Gastrocnemius medialis (tissue), 4 donors: ENCODE measurements at regions of chr7 and their contacts with region 1.

Region 1: DNA sequence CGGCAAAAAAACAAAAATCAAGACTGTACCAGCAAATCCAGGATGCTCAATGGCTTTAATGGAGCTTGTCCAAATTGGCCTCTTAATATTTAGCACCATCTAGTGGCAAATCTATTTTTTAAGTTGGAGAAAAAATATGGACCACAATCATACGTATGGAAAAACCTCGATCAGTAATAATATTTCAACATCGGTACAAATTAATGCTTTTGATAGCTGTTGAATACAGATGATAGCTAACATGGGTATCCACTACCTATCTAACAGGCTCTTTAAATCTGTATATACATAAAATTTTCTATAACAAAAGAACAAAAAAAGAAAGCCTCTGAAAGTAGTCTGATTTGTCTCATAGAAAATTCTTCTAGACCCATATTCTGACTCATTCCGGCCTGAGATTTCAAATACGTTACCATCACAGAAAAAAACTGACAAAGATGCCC is 29.2 kb downstream of the COA1 start:
- DNase-seq: no peak
- ATAC-seq: peak; percentile 68 to 75
- H3K4me3 ChIP-seq: no peak overlapping the region
- H3K27ac ChIP-seq: no peak overlapping the region
- H3K4me1 ChIP-seq: peaks cover 13 to 16% of the 10 kb centered on the region in 2 donors
- H3K27me3 ChIP-seq: no peaks in the 10 kb centered on the region
- CTCF ChIP-seq: peak; percentile 48 to 78 (median 69)
- POLR2A ChIP-seq: no peak

Region 2: DNA sequence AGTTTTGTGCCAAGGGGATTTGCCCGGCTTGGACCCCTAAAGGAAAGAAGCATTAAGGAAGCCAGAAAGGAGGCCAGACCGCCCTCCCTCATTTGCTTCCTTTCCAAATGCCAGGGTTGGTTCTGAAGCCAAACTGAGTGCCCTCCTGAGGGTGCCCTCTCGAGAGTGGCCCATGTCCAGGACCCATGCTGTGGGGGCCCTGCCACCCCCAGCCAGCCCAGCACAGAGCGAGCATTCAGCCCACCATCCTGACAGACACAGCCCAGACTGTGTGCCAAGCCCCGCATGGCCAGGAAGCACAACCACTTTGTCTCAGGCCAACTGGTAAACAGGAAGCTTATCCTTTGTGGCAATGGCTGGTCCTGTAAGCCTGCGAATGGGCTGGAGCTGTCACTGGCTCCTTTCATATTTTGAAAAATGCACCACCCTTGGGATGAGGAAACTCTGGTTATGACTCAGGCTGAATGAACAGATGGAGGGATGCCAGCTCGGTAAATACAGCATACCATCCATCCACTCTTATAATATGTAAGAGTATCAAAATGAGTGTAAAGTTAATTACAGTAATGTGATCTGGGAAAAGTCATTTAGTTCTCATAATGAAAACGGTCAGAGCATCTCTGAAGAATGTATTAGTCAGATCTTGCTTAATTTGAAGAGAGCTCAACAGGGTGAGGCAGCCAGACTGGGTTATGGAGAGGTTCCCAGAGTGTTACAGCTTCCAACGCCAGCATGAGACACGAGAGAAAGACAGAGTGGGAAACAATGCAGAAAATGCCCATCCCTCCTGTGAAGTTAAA is 52.2 kb before region 1 on chr7:
- in situ Hi-C with region 1: no loop called
- intact Hi-C with region 1: loop called (anchors 5 kb)
- DNase-seq: peak; percentile 63 to 70
- ATAC-seq: peak; percentile 92 to 93
- H3K4me3 ChIP-seq: peak overlapping the region in 1 of 4 donors; percentile 39
- H3K27ac ChIP-seq: peak overlapping the region; percentile 59 to 83 (median 80)
- H3K4me1 ChIP-seq: peaks cover 45 to 56% of the 10 kb centered on the region in 2 donors
- H3K27me3 ChIP-seq: no peaks in the 10 kb centered on the region
- CTCF ChIP-seq: no peak
- POLR2A ChIP-seq: no peak

Region 3: DNA sequence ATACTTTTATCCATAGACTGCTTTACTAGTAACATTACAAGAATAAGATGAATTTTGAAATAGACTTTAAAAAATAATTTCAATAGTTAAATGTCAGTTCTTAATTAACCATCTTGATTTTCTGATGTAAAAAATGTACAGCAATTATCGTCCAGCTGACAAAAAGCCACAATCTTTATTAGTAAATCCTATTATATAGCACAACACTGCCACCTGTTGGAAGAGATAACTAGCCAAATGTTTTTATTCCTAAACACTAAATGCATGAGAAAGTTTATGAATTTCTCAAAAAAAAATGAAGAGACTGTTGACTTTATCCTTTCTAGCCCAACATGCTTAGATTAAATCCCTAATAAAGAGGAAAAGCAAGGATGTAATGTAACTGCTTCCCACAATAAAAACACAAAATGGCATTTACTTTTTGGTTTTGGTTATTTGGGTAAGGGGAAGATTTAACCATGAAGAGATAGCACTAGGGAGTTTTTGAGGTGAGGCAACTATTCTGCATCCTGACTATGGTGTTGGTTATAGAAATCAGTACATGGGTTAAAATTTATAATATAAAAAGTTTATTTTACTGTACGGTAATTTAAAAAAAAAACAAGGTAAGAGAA is 21.2 kb after region 1 on chr7:
- in situ Hi-C with region 1: no loop called
- intact Hi-C with region 1: loop called (anchors 2 kb)
- DNase-seq: no peak
- ATAC-seq: peak in 1 of 2 donors; percentile 46
- H3K4me3 ChIP-seq: no peak overlapping the region
- H3K27ac ChIP-seq: peak overlapping the region in 2 of 4 donors; percentile 14 to 59
- H3K4me1 ChIP-seq: peaks cover 36 to 44% of the 10 kb centered on the region in 2 donors
- H3K27me3 ChIP-seq: no peaks in the 10 kb centered on the region
- CTCF ChIP-seq: peak; percentile 49 to 85 (median 73)
- POLR2A ChIP-seq: no peak

Region 4: DNA sequence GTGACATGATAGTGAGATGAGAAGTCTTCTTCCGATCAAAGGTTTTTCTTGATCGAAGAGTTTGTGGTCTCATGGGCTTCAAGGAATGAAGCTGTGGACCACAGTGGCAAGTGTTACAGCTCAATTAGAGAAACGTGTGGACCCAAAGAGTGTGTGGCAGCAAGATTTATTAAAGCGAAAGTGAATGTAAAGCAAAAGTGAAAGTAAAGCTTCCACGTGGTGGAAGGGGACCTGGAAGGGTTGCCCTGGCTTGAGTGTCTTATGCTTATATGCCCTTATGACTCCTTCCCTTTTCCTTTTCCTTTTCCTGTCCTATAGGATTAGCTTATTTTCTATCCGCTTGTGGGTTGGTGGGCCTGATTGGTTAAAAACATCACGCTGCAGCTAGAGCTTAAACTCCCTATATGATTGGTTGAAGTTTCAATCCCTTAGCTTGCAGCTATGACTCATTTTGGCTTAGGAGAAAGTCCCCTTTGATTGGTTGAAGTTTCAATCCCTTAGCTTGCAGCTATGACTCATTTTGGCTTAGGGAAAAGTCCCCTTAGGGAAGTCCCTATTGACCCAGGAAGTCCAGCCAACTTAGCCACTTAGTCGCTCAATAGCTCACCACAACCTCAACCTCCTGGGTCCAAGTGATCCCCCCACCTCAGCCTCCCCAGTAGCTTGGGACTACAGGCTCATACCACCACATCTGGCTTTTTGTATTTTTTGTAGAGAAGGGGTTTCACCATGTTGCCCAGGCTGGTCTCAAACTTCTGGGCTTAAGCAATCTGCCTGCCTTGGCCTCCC is 134.6 kb after region 1 on chr7:
- in situ Hi-C with region 1: loop called in 1 of 4 experiments (anchors 25 kb)
- intact Hi-C with region 1: no loop called
- DNase-seq: no peak
- ATAC-seq: no peak
- H3K4me3 ChIP-seq: peak overlapping the region; percentile 11 to 26 (median 20)
- H3K27ac ChIP-seq: no peak overlapping the region
- H3K4me1 ChIP-seq: no peaks in the 10 kb centered on the region
- H3K27me3 ChIP-seq: peaks cover 0 to 9% (median 0%) of the 10 kb centered on the region in 3 donors
- CTCF ChIP-seq: no peak
- POLR2A ChIP-seq: no peak